IMR-90 (cell line): ENCODE measurements at regions of chr1 and their contacts with region 1.

Region 1: DNA sequence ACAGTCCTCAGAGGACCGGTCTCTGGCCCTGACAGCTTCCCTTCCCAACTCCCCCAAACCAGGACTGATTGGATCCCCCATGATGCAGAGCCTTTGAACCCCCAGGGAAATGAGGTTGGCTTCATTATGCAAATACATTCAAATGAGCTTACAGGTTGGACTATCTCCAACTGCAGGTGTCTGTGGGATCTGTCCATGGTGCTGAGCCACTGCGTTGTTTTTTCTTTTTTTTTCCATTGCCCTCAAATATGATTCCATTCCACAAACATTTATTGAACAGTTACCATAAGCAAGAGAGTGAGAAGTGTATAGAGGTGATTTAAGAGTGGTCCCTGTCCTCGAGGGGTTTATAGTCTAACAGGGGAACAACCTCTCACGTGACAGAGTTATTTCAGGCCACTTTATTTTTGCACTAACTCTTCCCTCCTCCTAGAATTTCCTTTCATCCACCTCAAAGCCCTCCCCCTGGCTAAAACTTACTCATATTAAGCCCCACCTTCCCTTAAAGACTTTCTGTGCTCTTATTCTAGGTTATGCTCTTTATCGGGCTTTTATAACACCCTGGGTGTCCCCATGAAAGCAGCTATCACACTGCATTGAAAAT is 21.9 kb downstream of the DLGAP3 start:
- DNase-seq: no peak
- ATAC-seq: no peak
- H3K4me3 ChIP-seq: no peak overlapping the region
- H3K27ac ChIP-seq: no peak overlapping the region
- H3K4me1 ChIP-seq: no peaks in the 10 kb centered on the region
- H3K27me3 ChIP-seq: peaks cover 3% of the 10 kb centered on the region; the same call in 1 of the 2 replicates
- CTCF ChIP-seq: no peak
- POLR2A ChIP-seq: no peak
- RAD21 ChIP-seq: no peak

Region 2: GRCh38 chr1:34865981-34866761 is 41.4 kb before region 1 on chr1:
- CTCF ChIA-PET with region 1: no interaction called
- POLR2A ChIA-PET with region 1: no interaction called
- dilution Hi-C with region 1: no loop called
- in situ Hi-C with region 1: no loop called
- intact Hi-C with region 1: loop called (anchors 2 kb)
- DNase-seq: peak; percentile 53
- ATAC-seq: peak; percentile 90
- H3K4me3 ChIP-seq: peak overlapping the region; percentile 57
- H3K27ac ChIP-seq: peak overlapping the region; percentile 8; the same call in 1 of the 2 replicates
- H3K4me1 ChIP-seq: no peaks in the 10 kb centered on the region
- H3K27me3 ChIP-seq: peaks cover 29% of the 10 kb centered on the region
- CTCF ChIP-seq: peak; percentile 82
- POLR2A ChIP-seq: no peak
- RAD21 ChIP-seq: peak; percentile 40

Region 3: GRCh38 chr1:34946211-34946610 is 38.6 kb after region 1 on chr1:
- CTCF ChIA-PET with region 1: no interaction called
- POLR2A ChIA-PET with region 1: no interaction called
- dilution Hi-C with region 1: no loop called
- in situ Hi-C with region 1: no loop called
- intact Hi-C with region 1: no loop called
- DNase-seq: no peak
- ATAC-seq: no peak
- H3K4me3 ChIP-seq: no peak overlapping the region
- H3K27ac ChIP-seq: no peak overlapping the region
- H3K4me1 ChIP-seq: no peaks in the 10 kb centered on the region
- H3K27me3 ChIP-seq: no peaks in the 10 kb centered on the region
- CTCF ChIP-seq: no peak
- POLR2A ChIP-seq: no peak
- RAD21 ChIP-seq: no peak